ENCODE measurements at regions of chr9 and their contacts with region 1.

Region 1: DNA sequence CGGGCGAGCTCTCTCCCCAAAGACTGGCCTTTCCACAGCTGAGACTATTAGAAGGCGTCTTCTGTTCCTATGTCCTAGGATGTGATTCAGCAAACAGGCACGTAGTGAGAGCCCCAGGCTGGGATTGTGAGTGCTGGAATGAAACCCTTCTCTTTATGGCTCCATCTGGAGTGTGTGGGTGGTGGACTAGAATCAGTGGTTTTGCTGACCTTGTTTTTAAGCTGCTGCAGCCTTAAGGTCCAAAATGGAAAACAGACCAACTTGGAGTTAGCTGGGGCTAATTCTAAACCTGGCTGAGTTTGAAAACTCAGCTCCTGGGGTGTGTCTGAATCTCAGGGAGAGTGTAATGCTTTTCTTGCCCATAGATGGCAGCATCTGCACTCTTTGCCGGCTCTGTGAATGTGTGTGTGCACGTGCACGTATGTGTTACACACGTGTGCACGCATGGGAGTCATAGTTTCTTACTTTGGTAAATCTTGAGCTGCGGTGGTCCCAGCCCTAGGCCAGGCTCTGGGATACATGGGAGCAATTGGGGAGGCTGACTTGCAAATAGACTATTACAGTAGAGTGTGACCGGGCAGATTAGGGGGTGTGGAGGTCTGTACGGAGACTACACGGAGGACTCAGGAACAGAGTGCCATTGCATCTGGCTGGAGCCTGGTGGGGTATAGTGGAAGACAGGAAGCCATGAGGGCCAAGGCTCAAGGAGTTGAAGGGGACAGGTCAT is 10.7 kb downstream of the GSN start:
- DNase-seq: peak; percentile 97
- H3K4me3 ChIP-seq: peak overlapping the region; percentile 35
- H3K27ac ChIP-seq: peak overlapping the region; percentile 96
- H3K27me3 ChIP-seq: no peaks in the 10 kb centered on the region
- CTCF ChIP-seq: peak; percentile 79

Region 2: GRCh38 chr9:121261107-121261460 is 17.6 kb before region 1 on chr9:
- CTCF ChIA-PET with region 1: interaction called, 10 read pairs
- POLR2A ChIA-PET with region 1: interaction called, 5 read pairs
- DNase-seq: no peak
- H3K4me3 ChIP-seq: no peak overlapping the region
- H3K27ac ChIP-seq: no peak overlapping the region
- H3K27me3 ChIP-seq: peaks cover 2% of the 10 kb centered on the region
- CTCF ChIP-seq: no peak

Region 3: GRCh38 chr9:121267689-121268597 is 10.8 kb before region 1 on chr9 and contains the start of gene GSN:
- CTCF ChIA-PET with region 1: interaction called, 33 read pairs
- POLR2A ChIA-PET with region 1: interaction called, 55 read pairs
- DNase-seq: no peak
- H3K4me3 ChIP-seq: peak within 1 kb of the TSS; percentile 93
- H3K27ac ChIP-seq: peak within 1 kb of the TSS; percentile 77
- H3K27me3 ChIP-seq: peaks cover 2% of the 10 kb centered on the region
- CTCF ChIP-seq: peak; percentile 26; the same call in 1 of the 2 replicates
- polyA plus RNA-seq, gene GSN: 421 and 565 TPM in 2 replicates

Region 4: DNA sequence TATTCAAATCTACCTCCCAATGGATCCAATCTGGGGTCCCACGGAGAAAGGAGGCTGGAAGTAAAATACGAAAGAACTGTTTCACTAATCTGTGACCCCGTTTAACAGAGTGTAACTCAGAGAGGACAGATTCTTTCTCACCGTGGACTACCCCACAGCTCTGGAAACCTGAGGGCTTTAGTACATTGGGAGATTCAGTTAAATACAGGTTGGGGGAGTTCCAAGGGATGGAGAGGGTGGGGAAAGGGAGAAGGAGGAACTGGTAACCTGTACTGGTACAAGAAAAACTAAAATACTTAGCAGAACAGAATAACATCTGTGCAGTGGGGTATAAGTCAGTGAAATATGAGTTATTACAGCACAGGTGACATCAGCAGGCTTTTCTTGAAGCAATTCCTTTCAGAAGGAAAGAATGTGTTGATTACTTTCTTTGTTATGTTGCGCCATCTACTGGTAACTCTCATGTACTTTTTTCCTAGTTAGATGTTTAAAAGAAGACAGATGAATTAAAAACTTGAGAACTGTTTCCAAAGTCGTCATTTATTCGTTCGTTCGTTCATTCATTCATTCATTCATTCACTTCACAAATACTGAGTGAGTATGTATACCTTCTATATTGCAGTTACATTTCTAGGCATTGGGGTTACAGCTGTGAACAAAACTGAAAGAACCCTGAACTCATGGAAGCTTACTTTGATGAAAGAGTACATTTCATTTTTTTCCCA is 121.3 kb after region 1 on chr9:
- CTCF ChIA-PET with region 1: interaction called, 12 read pairs
- POLR2A ChIA-PET with region 1: interaction called, 3 read pairs
- DNase-seq: peak; percentile 53
- H3K4me3 ChIP-seq: no peak overlapping the region
- H3K27ac ChIP-seq: no peak overlapping the region
- H3K27me3 ChIP-seq: no peaks in the 10 kb centered on the region
- CTCF ChIP-seq: peak; percentile 61

Region 5: DNA sequence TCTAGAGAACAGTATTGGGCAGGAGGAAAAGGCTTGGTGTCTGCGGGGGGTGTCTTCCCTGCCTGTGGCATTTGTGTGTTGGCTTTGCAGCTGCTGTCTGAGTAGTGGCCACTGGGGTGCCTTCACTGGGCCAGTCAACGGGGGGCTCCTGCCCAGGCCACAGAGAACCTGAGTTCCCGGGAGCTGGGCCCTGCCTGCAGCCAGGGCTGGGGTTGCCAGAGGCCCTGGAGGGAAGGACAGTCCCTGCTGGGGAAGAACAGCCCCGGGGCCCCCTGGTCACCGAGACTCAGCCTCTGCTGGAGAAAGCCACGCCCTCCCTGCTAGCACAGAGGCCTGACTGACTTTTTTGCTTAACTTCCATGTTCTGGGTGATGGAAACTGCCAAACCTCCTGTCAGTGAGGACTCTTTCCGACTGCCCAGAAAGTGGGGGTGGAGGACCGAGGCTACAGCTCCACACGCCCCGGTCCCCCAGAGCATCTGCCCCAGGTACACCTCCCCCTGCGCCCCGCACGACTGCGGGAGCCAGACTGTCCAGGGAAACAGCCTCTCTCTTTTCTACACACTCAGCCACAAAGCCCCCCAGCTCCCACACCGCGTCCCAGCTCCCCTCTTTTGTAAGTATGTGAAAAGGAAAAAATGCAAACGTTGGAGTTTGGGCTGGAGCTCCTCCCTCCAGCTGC is 506.2 kb after region 1 on chr9:
- CTCF ChIA-PET with region 1: no interaction called
- POLR2A ChIA-PET with region 1: no interaction called
- DNase-seq: no peak
- H3K4me3 ChIP-seq: no peak overlapping the region
- H3K27ac ChIP-seq: no peak overlapping the region
- H3K27me3 ChIP-seq: no peaks in the 10 kb centered on the region
- CTCF ChIP-seq: 0 out of 2 replicates have a peak, but pooled peaks have one; percentile 15

Measured in AG04450 (cell line).